HepG2 (cell line): ENCODE measurements at regions of chr4 and their contacts with region 1.

Region 1: GRCh38 chr4:173288296-173288695 is 45.9 kb downstream of the HMGB2 start:
- DNase-seq: peak; percentile 60
- ATAC-seq: peak; percentile 84
- H3K4me3 ChIP-seq: no peak overlapping the region
- H3K27ac ChIP-seq: no peak overlapping the region
- H3K4me1 ChIP-seq: no peaks in the 10 kb centered on the region
- H3K27me3 ChIP-seq: 0 out of 5 replicates have a peak, but pooled peaks cover 0 to 3% of the 10 kb centered on the region in 2 experiments
- CTCF ChIP-seq: peak; percentile 75
- EP300 ChIP-seq: no peak
- POLR2A ChIP-seq: no peak
- RAD21 ChIP-seq: 0 out of 2 replicates have a peak, but pooled peaks have one; percentile 21

Region 2: GRCh38 chr4:173025131-173025530 is 263.2 kb before region 1 on chr4:
- CTCF ChIA-PET with region 1: no interaction called
- POLR2A ChIA-PET with region 1: no interaction called
- in situ Hi-C with region 1: no loop called
- intact Hi-C with region 1: no loop called
- DNase-seq: peak; percentile 38
- ATAC-seq: peak; percentile 77
- H3K4me3 ChIP-seq: no peak overlapping the region
- H3K27ac ChIP-seq: no peak overlapping the region
- H3K4me1 ChIP-seq: no peaks in the 10 kb centered on the region
- H3K27me3 ChIP-seq: no peaks in the 10 kb centered on the region
- CTCF ChIP-seq: peak; percentile 53
- EP300 ChIP-seq: no peak
- POLR2A ChIP-seq: no peak
- RAD21 ChIP-seq: no peak

Region 3: DNA sequence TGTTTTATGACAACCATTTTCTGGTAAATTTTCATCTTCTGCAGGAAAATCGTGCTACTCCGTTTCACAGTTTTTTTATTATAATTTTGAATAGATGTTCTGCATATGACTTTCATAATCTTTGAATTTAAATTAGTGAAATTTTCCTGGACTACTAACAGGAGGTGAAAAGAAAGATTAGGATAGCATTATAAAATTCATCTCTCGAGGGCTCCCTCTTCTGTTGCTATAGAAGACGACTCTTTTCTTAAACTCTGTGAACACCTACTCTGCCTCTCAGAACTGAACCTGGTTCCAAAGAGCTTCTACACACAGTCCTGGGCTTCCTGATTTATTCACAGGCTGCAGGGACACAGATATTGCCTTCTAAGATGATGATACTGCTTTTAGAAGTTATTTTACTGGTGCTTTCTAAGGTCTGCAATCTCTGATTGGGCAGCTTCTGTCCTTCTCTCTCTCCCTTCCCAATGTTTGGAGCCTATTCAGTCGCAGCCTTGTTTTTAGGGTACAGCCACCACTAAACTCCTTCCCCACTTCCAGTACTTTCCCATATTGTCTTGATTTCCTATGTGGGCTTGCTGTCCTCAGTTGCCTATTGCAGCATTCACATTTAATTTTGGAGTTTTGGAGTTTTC is 72.4 kb after region 1 on chr4:
- CTCF ChIA-PET with region 1: no interaction called
- POLR2A ChIA-PET with region 1: no interaction called
- in situ Hi-C with region 1: no loop called
- intact Hi-C with region 1: loop called (anchors 2 kb)
- DNase-seq: no peak
- ATAC-seq: peak; percentile 82
- H3K4me3 ChIP-seq: no peak overlapping the region
- H3K27ac ChIP-seq: no peak overlapping the region
- H3K4me1 ChIP-seq: no peaks in the 10 kb centered on the region
- H3K27me3 ChIP-seq: no peaks in the 10 kb centered on the region; a peak in 1 of 5 replicates
- CTCF ChIP-seq: peak; percentile 30
- EP300 ChIP-seq: no peak
- POLR2A ChIP-seq: no peak
- RAD21 ChIP-seq: no peak

Region 4: GRCh38 chr4:173494013-173494970 is 206.0 kb after region 1 on chr4:
- CTCF ChIA-PET with region 1: interaction called, 4 read pairs
- POLR2A ChIA-PET with region 1: no interaction called
- in situ Hi-C with region 1: no loop called
- intact Hi-C with region 1: loop called (anchors 1 kb)
- DNase-seq: peak; percentile 66
- ATAC-seq: peak; percentile 93
- H3K4me3 ChIP-seq: peak overlapping the region in 1 of 3 experiments; percentile 44; a peak in 2 of 6 replicates
- H3K27ac ChIP-seq: no peak overlapping the region
- H3K4me1 ChIP-seq: peaks cover 28% of the 10 kb centered on the region
- H3K27me3 ChIP-seq: peaks cover 0 to 4% of the 10 kb centered on the region in 2 experiments; a peak in 2 of 5 replicates
- CTCF ChIP-seq: peak; percentile 80
- EP300 ChIP-seq: no peak
- POLR2A ChIP-seq: no peak
- RAD21 ChIP-seq: peak; percentile 40

Region 5: DNA sequence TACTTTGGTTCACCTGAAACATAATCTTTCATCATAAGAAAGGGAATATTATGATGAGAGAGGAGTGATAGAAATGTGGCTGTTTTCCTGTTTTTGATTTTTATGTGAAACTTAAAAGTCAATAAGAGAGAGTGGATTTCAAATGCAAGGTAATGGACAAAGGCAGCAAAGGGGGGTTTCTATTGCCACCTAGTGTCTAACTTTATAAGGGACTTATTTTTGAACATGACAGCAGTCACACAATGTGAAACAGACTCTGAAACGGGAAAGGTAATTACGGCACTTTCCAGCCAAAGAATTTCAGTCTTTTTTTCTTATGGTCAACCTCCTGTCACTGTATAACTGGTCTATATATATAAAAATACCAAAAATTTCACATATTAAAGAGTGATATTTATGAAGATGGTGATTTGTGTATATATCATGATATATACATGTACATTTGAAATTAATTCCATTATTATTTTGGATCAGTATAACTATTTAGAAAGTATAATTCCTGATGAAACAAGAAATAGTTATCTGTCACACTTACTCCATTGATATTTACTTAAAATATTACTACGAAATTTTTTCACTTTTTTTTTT is 868.0 kb after region 1 on chr4:
- CTCF ChIA-PET with region 1: interaction called, 5 read pairs
- POLR2A ChIA-PET with region 1: no interaction called
- in situ Hi-C with region 1: no loop called
- intact Hi-C with region 1: loop called (anchors 1 kb)
- DNase-seq: peak; percentile 23
- ATAC-seq: peak; percentile 77
- H3K4me3 ChIP-seq: no peak overlapping the region
- H3K27ac ChIP-seq: no peak overlapping the region
- H3K4me1 ChIP-seq: no peaks in the 10 kb centered on the region
- H3K27me3 ChIP-seq: no peaks in the 10 kb centered on the region
- CTCF ChIP-seq: peak; percentile 66
- EP300 ChIP-seq: no peak
- POLR2A ChIP-seq: no peak
- RAD21 ChIP-seq: no peak